Activated CD4-positive, alpha-beta T cell treated with anti-CD3 and anti-CD28 coated beads for 36 hours (primary cell): ENCODE measurements at regions of chr10 and their contacts with region 1.

Region 1: DNA sequence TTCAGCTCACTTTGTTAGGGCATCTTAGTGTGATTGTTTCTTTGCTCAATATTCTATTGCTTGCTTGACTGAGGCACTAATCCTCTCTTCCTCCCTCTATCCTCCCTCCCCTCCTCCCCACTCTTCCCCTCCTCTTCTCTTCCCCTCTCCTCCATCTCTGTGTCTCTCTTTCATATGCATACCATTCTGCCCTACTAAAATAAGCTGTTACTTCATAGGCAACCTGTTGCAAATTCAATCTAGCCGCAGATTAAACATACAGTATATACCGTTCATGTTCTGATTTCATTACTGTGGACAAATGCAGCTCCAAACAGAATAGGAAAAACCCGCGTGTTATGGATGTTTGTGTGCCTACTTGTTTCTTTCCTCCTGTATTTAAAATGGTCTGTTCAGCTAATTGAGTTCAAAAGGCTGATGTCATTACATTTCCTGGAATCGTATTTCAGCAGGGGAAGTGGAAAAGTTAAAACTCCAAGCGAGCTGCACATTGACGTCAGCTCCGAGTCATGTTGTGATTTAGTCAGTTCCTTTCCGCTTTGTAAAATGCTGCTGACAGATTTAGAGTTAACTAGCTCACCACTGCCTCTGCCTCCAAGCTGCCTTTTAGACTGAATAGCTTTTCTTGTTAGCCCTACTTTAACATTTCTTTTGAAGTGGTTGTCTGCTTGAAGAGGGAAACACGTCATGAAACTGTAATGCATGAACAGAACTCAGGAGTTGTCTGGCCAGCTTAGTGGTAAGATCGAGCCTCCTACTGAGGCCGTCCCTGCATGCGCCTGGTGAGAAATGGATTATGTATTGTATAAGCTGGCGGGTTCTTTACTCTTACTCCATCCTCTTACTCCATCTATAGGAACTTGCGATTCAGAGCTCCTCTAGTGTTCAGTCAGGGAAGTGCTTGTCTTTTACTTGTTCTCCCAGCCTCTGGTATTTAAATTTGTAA is 69.0 kb downstream of the CREM start:
- DNase-seq: peak; percentile 89
- ATAC-seq: peak; percentile 91
- H3K4me3 Mint-ChIP-seq: peak overlapping the region; percentile 79
- H3K27ac Mint-ChIP-seq: peak overlapping the region; percentile 98
- H3K4me1 Mint-ChIP-seq: peaks cover 50% of the 10 kb centered on the region
- H3K27me3 Mint-ChIP-seq: no peaks in the 10 kb centered on the region

Region 2: DNA sequence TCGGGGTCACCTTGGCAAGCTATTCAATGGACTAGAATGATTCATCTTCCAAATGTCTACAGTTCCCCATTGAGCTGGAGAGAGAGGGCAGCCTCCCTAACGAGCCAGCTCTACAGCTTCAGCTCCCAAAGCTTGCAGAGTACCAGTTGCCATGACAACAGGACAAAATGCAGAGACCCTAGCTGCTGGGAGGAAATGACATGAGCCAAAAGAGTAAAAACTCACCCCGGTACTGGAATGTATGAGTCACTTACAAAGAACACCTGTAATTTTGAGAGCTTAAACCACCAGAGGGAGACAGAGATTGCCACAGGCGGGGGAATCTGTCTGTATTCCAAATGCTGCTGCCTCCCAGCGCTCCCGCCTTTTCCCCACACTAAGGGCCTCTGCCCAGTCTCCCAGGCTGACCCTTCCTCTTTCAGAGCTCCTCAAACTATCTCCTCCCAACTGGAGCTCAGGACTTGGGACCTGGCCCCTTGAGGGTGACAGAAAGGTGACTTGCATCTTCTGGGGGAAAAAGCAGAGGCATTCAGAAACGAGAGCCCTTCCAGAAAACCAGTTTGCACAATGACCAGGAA is 201.0 kb before region 1 on chr10:
- CTCF ChIA-PET with region 1: interaction called, 9 read pairs
- POLR2A ChIA-PET with region 1: interaction called, 5 read pairs
- intact Hi-C with region 1: loop called (anchors 2 kb)
- DNase-seq: peak; percentile 71
- ATAC-seq: peak; percentile 95
- H3K4me3 Mint-ChIP-seq: no peak overlapping the region
- H3K27ac Mint-ChIP-seq: peak overlapping the region; percentile 47
- H3K4me1 Mint-ChIP-seq: peaks cover 16% of the 10 kb centered on the region
- H3K27me3 Mint-ChIP-seq: no peaks in the 10 kb centered on the region

Region 3: GRCh38 chr10:35119378-35119777 is 76.3 kb before region 1 on chr10:
- CTCF ChIA-PET with region 1: interaction called, 102 read pairs
- POLR2A ChIA-PET with region 1: interaction called, 11 read pairs
- intact Hi-C with region 1: no loop called
- DNase-seq: no peak
- ATAC-seq: no peak
- H3K4me3 Mint-ChIP-seq: no peak overlapping the region
- H3K27ac Mint-ChIP-seq: no peak overlapping the region
- H3K4me1 Mint-ChIP-seq: peaks cover 12% of the 10 kb centered on the region
- H3K27me3 Mint-ChIP-seq: no peaks in the 10 kb centered on the region

Region 4: GRCh38 chr10:35153716-35154479 is 41.7 kb before region 1 on chr10:
- CTCF ChIA-PET with region 1: interaction called, 32 read pairs
- POLR2A ChIA-PET with region 1: interaction called, 17 read pairs
- intact Hi-C with region 1: loop called (anchors 1 kb)
- DNase-seq: no peak
- ATAC-seq: no peak
- H3K4me3 Mint-ChIP-seq: no peak overlapping the region
- H3K27ac Mint-ChIP-seq: peak overlapping the region; percentile 23
- H3K4me1 Mint-ChIP-seq: peaks cover 49% of the 10 kb centered on the region
- H3K27me3 Mint-ChIP-seq: no peaks in the 10 kb centered on the region

Region 5: DNA sequence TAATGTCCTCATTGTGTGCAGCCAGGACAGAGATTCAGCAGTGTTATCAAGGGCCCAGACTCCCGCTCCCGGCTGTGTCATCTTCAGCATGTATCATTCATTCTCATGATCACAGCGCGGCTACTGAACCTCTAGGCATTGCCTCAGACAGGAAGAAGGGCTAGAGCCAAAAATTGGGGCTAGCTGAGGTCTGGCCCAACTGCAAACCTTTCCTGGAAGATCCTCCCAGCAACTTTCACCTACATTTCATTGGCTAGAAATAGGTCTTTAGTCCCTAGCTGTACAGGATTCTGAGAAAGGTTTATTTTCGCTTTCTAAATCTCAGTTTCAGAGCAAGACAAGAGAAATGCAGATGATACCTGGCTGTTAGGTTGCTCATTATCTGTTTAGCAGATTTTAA is 12.9 kb after region 1 on chr10:
- CTCF ChIA-PET with region 1: interaction called, 34 read pairs
- POLR2A ChIA-PET with region 1: interaction called, 3 read pairs
- intact Hi-C with region 1: loop called in 1 of 2 experiments (anchors 1 kb)
- DNase-seq: peak; percentile 72
- ATAC-seq: peak; percentile 93
- H3K4me3 Mint-ChIP-seq: peak overlapping the region; percentile 36
- H3K27ac Mint-ChIP-seq: peak overlapping the region; percentile 75
- H3K4me1 Mint-ChIP-seq: peaks cover 24% of the 10 kb centered on the region
- H3K27me3 Mint-ChIP-seq: no peaks in the 10 kb centered on the region

Region 6: GRCh38 chr10:35355971-35356724 is 160.5 kb after region 1 on chr10:
- CTCF ChIA-PET with region 1: interaction called, 7 read pairs
- POLR2A ChIA-PET with region 1: interaction called, 5 read pairs
- intact Hi-C with region 1: loop called in 1 of 2 experiments (anchors 1 kb)
- DNase-seq: peak; percentile 67
- ATAC-seq: peak; percentile 76
- H3K4me3 Mint-ChIP-seq: peak overlapping the region; percentile 71
- H3K27ac Mint-ChIP-seq: peak overlapping the region; percentile 94
- H3K4me1 Mint-ChIP-seq: peaks cover 78% of the 10 kb centered on the region
- H3K27me3 Mint-ChIP-seq: no peaks in the 10 kb centered on the region

Region 7: DNA sequence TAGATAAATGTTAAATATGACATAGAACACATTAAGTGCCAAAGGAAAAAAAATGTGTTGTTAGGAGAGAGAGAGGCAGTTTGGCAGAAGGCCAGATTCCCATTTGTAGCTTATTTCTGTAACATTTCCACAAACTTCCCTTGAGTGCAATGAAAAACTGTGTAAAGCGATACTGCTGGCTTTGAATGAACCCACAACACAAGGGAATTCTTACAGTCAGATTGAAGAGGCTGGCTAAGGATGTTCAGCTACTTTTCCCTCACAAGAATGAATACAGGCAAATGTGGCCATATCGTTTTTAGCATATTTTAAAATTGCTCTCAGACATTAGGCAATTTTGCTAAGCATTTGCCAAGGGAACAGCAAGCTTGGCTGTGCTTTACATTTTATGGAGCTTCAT is 1060.5 kb after region 1 on chr10:
- CTCF ChIA-PET with region 1: no interaction called
- POLR2A ChIA-PET with region 1: no interaction called
- intact Hi-C with region 1: no loop called
- DNase-seq: no peak
- ATAC-seq: no peak
- H3K4me3 Mint-ChIP-seq: no peak overlapping the region
- H3K27ac Mint-ChIP-seq: no peak overlapping the region
- H3K4me1 Mint-ChIP-seq: no peaks in the 10 kb centered on the region
- H3K27me3 Mint-ChIP-seq: no peaks in the 10 kb centered on the region